WTC11 (cell line): ENCODE measurements at regions of chr11 and their contacts with region 1.

Region 1: DNA sequence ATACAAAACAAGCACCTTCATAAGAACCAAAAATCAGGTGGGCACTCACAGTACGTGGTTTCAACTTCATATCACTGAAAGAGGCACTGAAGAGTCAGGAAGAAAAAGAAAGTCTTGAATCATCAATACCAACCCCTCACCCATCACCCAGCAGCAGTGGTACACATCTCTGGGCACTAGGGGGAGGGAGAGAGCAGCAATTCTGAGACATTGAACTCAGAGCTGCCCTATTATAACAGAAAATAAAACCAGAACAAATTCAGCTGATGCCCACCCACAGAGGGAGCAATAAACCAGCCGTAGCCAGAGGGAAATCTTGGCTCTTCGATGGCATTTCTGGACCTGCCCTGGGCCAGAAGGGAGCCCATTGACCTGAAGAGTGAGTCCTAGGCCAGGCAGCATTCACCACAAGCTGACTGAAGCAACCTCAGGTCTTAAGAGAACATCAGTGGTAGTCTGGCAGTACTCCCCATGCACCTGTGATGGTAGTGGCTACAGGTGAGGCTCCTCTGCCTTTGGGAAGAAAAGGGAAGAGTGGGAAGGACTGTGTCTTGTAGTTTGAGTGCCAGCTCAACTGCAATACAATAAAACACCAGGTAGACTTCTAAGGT is 42.2 kb upstream of the FAM181B start:
- DNase-seq: peak; percentile 78
- ATAC-seq: peak; percentile 100
- H3K4me3 Mint-ChIP-seq: no peak overlapping the region
- H3K27ac Mint-ChIP-seq: no peak overlapping the region
- H3K4me1 Mint-ChIP-seq: no peaks in the 10 kb centered on the region
- H3K27me3 Mint-ChIP-seq: no peaks in the 10 kb centered on the region
- CTCF ChIP-seq: peak; percentile 80

Region 2: GRCh38 chr11:82384308-82384707 is 391.5 kb before region 1 on chr11:
- CTCF ChIA-PET with region 1: no interaction called
- POLR2A ChIA-PET with region 1: no interaction called
- DNase-seq: no peak
- ATAC-seq: peak; percentile 48
- H3K4me3 Mint-ChIP-seq: no peak overlapping the region
- H3K27ac Mint-ChIP-seq: no peak overlapping the region
- H3K4me1 Mint-ChIP-seq: no peaks in the 10 kb centered on the region
- H3K27me3 Mint-ChIP-seq: no peaks in the 10 kb centered on the region
- CTCF ChIP-seq: no peak

Region 3: DNA sequence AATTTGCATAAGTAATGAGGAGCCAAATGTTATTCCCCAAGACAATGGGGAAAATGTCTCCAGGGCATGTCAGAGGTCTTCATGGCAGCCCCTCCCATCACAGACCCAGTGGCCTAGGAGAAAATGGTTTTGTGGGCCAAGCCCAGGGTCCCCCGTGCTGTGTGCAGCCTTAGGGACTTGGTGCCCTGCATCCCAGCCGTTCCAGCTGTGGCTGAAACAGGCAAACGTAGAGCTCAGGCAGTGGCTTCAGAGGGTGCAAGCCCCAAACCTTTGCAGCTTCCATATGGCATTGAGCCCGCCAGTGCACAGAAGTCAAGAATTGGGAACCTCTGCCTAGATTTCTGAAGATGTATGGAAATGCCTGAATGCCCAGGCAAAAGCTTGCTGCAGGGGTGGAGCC is 122.1 kb before region 1 on chr11:
- CTCF ChIA-PET with region 1: no interaction called
- POLR2A ChIA-PET with region 1: no interaction called
- DNase-seq: no peak
- ATAC-seq: no peak; the same call in 1 of the 2 replicates
- H3K4me3 Mint-ChIP-seq: no peak overlapping the region
- H3K27ac Mint-ChIP-seq: no peak overlapping the region
- H3K4me1 Mint-ChIP-seq: peaks cover 6% of the 10 kb centered on the region; the same call in 1 of the 2 replicates
- H3K27me3 Mint-ChIP-seq: no peaks in the 10 kb centered on the region
- CTCF ChIP-seq: no peak

Region 4: DNA sequence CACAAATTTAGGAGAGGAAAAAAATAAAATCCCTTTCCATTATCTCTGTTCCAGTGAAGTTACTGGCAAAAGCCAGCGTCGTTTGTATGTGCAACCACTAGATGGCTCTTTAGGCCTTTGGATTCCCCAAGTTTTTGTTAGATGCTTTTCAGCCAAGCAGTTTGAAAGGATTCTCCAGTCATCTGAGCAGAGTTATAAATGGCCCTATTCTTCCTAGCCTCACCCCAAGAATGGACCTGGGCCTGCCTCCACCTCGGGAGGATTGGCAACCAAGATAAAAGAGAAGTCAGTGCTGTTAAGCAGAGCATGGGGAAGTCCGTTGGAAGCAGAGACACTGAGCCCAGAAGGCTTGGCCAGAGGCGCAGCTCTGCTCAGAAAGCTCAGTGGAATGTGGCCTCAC is 57.5 kb before region 1 on chr11:
- CTCF ChIA-PET with region 1: interaction called, 10 read pairs
- POLR2A ChIA-PET with region 1: no interaction called
- DNase-seq: peak; percentile 34
- ATAC-seq: peak; percentile 77
- H3K4me3 Mint-ChIP-seq: no peak overlapping the region
- H3K27ac Mint-ChIP-seq: no peak overlapping the region
- H3K4me1 Mint-ChIP-seq: peaks cover 3% of the 10 kb centered on the region; the same call in 1 of the 2 replicates
- H3K27me3 Mint-ChIP-seq: no peaks in the 10 kb centered on the region
- CTCF ChIP-seq: peak; percentile 55

Region 5: DNA sequence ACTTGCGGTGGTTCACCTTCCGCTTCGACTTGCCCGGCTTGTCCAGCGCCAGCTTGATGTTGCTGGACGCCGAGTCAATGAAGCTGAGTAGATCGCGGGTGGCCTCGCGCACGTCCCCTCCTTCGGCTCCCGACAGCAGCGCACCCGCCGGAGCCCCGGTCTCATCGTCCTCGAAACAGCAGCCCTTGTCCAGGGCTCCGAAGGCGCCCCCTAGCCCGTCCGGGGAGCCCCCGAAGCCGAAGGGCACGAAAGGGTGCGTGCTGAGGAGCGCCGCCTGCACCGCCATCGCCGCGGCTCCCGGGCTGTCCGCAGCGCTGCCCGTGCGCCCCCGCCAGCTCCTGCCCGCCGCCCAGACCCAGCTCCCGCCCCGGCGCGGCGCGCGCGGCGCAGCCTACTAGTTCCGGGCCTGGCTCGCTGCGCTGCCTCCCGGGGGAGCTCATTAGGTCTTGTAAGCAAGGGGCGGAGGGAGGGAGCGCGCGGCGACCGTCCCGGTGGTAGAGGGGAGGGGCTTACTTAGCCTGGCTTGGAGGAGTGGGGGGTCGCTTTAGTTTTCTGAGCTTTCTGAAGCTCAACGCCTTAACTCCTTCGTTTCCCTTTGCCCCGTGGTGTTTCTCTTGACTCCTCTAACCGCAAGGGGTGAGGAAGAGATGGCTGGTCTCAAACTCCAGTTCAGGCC is 42.3 kb before region 1 on chr11 and contains the start of gene FAM181B:
- CTCF ChIA-PET with region 1: interaction called, 22 read pairs
- POLR2A ChIA-PET with region 1: no interaction called
- DNase-seq: peak; percentile 83
- ATAC-seq: peak; percentile 81
- H3K4me3 Mint-ChIP-seq: peak within 1 kb of the TSS; percentile 68
- H3K27ac Mint-ChIP-seq: no peak within 1 kb of the TSS
- H3K4me1 Mint-ChIP-seq: peaks cover 34% of the 10 kb centered on the region
- H3K27me3 Mint-ChIP-seq: peaks cover 59% of the 10 kb centered on the region
- CTCF ChIP-seq: no peak
- total RNA-seq, gene FAM181B: 0.80 to 1.1 TPM (median 1.0 TPM) in 3 replicates

Region 6: DNA sequence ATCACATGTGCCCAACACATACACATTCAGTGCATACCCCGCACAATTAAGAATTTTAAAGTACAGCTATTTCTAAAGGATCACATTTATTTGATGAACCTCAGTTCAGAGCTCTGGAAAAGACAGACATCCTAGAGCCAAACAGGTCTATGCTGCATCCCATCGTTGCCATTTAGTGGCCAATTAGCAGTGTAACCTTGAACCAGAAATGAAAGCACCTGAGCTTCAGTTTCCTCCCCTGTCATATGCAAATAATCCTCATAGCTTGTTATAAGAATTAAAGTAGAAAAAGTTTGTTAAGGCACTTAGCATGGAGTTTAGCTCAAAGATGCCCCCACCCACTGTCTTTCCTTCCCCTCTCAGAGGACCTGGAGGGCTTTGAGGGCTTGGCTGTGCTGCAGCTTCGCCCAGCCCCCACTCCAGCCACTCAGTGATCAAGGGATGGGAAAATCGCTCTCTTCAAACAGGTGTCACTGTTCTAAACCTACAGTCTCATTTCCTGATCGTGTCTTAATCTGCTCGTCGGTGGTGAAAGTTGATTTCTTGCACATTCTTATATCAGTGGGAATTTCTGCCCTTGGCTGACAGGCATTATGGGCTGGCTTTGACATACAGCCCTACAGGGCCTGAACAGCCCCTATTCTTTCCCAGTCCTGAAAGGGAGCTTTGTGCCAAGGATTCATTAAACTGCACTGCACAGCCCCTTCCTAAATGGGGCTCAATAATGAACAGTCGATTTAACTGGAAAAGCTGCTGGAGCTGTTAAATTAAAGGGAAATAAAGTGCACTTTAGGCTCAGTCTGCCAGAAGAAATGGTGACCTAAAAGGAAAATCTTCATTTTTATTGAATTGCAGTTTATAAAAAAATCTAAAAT is 18.8 kb before region 1 on chr11:
- CTCF ChIA-PET with region 1: interaction called, 22 read pairs
- POLR2A ChIA-PET with region 1: no interaction called
- DNase-seq: no peak
- ATAC-seq: peak; percentile 75
- H3K4me3 Mint-ChIP-seq: no peak overlapping the region
- H3K27ac Mint-ChIP-seq: no peak overlapping the region
- H3K4me1 Mint-ChIP-seq: peaks cover 9% of the 10 kb centered on the region
- H3K27me3 Mint-ChIP-seq: no peaks in the 10 kb centered on the region
- CTCF ChIP-seq: no peak

Region 7: DNA sequence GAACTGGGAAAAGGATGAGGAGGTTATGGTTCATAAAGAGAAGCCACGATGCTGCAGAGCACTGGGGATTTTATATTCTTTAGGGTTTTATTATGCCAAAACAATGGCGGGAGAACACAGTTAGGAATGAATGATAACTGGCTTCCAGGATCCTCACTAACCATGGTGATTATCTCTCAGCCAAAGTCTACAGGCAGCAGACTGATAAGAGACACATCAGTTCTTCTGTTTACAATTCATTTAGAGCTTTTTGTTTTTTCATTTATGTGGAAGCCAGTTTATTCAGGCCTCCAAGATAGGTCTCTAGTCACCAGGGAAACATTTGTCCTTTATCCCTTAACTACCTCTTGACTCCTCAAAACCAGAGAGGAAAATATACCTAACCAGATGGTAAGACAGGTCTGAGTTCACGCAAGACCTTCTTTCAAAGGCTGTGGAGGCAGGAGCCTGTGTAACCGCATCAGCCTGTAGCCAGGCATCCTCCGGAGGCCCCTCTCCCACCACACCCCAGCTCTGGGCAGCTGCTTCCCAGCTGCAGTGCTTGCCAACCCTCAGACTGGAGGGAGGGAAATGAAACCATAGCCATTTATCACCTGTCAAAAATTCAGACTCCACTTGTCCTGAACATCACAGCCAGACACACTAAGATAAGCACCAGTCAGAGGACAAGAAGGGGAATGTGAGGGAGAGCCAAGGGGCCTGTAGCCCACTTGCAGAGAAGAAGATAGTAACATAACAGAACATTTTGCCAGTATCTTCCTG is 15.1 kb after region 1 on chr11:
- CTCF ChIA-PET with region 1: interaction called, 20 read pairs
- POLR2A ChIA-PET with region 1: interaction called, 3 read pairs
- DNase-seq: no peak
- ATAC-seq: no peak
- H3K4me3 Mint-ChIP-seq: no peak overlapping the region
- H3K27ac Mint-ChIP-seq: no peak overlapping the region
- H3K4me1 Mint-ChIP-seq: no peaks in the 10 kb centered on the region
- H3K27me3 Mint-ChIP-seq: no peaks in the 10 kb centered on the region
- CTCF ChIP-seq: no peak

Region 8: DNA sequence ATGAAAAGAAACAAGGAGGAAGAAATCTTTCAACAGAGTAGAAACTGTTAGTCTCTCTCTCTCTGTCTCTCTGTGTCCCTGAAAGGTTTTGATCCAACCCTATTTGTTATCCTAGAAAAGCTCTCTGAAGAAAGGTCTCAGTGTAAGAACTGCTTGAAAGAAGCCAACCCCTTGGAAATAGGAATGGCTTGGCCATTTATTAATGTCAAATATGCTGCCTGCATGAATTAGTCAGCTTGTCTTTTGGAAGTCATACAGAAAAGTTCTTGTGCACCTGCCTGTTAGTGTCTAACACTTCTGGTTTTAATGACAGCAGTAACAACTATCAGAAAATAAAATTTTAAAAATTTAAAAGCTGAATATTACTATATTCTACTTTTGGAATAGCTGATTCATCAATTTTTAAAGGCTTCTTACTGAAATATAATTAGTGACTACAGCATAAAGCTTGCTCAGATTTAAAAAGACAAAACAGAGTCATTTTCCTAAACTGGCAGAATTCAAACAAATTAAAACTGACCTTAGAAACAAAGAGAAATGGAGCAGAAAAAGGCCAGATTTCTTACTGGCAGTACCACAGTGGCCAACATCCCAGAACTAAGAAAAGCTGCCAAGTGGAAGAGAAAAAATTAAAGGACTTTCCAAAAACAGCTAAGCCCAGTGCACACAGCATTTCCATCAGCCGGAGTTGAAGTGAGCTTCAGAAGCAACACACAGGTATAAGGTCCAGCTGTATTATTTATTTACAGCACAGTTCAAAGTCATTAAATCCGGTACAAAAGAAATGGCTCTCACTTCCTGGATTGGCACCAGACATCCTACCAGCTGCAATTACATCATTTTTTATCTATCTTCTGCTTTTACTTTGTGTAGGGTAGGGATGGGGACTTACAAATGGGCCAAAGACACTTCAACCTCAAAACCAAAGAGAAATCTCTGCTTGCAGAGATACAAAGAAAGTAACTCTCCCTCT is 48.1 kb after region 1 on chr11:
- CTCF ChIA-PET with region 1: interaction called, 13 read pairs
- POLR2A ChIA-PET with region 1: no interaction called
- DNase-seq: no peak
- ATAC-seq: no peak
- H3K4me3 Mint-ChIP-seq: no peak overlapping the region
- H3K27ac Mint-ChIP-seq: no peak overlapping the region
- H3K4me1 Mint-ChIP-seq: no peaks in the 10 kb centered on the region
- H3K27me3 Mint-ChIP-seq: no peaks in the 10 kb centered on the region
- CTCF ChIP-seq: no peak